Common myeloid progenitor, CD34-positive (primary cell): ENCODE measurements at regions of chr15 and their contacts with region 1.

Region 1: GRCh38 chr15:74799856-74800547 is 12.6 kb upstream of the LMAN1L start:
- DNase-seq: peak; percentile 83 to 90 (median 86)
- H3K4me3 ChIP-seq: no peak overlapping the region
- H3K27ac ChIP-seq: peak overlapping the region; percentile 33 to 56
- H3K4me1 ChIP-seq: peaks cover 11 to 47% (median 43%) of the 10 kb centered on the region in 4 experiments
- H3K27me3 ChIP-seq: no peaks in the 10 kb centered on the region

Region 2: GRCh38 chr15:74781431-74782258 is 18.4 kb before region 1 on chr15 and contains the start of gene CSK:
- CTCF ChIA-PET with region 1: interaction called, 1,027 read pairs
- POLR2A ChIA-PET with region 1: interaction called, 10 read pairs
- DNase-seq: peak; percentile 72 to 84 (median 81)
- H3K4me3 ChIP-seq: peak within 1 kb of the TSS; percentile 59 to 97 (median 86)
- H3K27ac ChIP-seq: peak within 1 kb of the TSS; percentile 75 to 89
- H3K4me1 ChIP-seq: peaks cover 34 to 91% (median 91%) of the 10 kb centered on the region in 4 experiments
- H3K27me3 ChIP-seq: no peaks in the 10 kb centered on the region

Region 3: DNA sequence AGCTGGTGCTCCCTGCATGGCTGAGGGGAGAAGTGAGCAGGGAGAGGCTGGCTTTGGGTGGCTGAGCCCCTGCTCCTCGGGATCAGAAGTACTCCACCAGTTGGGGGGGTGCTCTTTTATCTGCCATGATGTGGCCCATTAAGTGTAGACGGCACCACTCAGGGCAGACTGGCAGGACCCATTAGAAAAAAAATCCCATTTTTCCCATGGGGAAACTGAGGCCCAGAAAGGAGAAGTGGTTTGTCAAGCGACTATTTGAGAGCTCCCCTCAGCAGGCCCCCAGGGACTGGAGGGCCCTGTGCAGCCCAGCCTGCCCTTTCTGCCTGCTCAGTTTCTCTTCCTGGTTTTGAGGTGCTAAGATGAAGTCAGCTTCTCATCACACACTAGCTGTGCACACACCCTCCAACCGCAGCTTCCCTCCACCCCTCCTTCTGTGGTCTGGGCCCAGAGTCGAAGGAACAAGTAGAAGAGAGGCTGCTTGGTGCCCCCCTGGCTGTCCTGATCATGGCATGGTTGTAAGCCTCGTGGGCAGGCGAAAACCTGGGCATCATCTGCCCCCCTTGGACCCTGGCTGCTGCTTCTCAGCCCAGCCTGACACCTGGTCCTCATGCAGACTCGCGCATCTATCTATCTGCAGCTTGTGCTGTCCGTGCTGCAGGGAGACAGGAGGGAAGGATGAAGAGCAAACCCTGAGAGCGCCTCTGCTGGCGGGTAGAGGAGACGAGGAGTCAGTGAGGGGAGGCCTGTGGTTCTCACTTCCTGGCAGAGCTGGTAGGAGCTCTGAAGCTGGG is 12.6 kb before region 1 on chr15:
- CTCF ChIA-PET with region 1: interaction called, 1,027 read pairs
- POLR2A ChIA-PET with region 1: interaction called, 10 read pairs
- DNase-seq: peak; percentile 97 to 99 (median 99)
- H3K4me3 ChIP-seq: peak overlapping the region in 5 of 7 experiments; percentile 50 to 71 (median 58)
- H3K27ac ChIP-seq: peak overlapping the region; percentile 54 to 89
- H3K4me1 ChIP-seq: peaks cover 45 to 100% (median 98%) of the 10 kb centered on the region in 4 experiments
- H3K27me3 ChIP-seq: no peaks in the 10 kb centered on the region

Region 4: DNA sequence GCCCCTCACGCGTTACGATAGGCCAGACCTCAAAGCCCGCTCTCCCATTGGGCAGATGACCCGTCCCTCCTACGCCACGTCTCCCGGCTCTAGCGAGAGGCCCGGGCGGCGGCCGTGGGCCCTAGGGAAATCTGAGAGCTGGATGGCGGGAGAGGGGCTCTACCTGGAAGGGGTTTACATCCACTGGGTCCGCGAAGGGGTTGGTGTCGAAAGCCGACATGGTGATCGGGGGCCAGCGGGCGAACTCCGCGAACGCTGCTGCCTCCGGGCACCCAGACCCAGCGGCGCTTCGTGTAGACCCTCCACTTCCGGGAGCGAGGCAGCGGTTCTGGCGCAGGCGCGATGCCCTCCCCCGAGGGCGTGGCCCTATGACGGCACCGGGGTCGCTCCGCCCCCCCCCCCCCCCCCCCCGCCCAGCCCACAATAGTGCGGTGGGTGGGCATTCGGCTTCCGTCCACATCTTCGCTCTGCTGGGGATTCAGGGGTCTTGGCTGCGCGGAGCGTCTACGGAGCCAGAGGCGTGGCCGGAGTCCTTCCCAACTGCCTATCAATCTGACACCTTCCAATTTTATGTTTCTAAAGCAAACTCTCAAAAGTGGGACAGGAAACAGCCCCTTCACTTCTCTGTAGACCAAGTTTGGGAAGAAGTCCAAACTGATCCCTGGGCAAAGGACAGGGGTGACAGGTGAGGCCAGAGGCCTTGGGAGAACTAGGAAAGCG is 73.2 kb after region 1 on chr15 and contains the start of gene SCAMP2:
- CTCF ChIA-PET with region 1: no interaction called
- POLR2A ChIA-PET with region 1: no interaction called
- DNase-seq: peak; percentile 95 to 98 (median 97)
- H3K4me3 ChIP-seq: peak within 1 kb of the TSS; percentile 73 to 97 (median 87)
- H3K27ac ChIP-seq: peak within 1 kb of the TSS; percentile 95 to 98
- H3K4me1 ChIP-seq: peaks cover 23 to 54% (median 51%) of the 10 kb centered on the region in 4 experiments
- H3K27me3 ChIP-seq: no peaks in the 10 kb centered on the region